HepG2 (cell line): ENCODE measurements at regions of chr17 and their contacts with region 1.

Region 1: DNA sequence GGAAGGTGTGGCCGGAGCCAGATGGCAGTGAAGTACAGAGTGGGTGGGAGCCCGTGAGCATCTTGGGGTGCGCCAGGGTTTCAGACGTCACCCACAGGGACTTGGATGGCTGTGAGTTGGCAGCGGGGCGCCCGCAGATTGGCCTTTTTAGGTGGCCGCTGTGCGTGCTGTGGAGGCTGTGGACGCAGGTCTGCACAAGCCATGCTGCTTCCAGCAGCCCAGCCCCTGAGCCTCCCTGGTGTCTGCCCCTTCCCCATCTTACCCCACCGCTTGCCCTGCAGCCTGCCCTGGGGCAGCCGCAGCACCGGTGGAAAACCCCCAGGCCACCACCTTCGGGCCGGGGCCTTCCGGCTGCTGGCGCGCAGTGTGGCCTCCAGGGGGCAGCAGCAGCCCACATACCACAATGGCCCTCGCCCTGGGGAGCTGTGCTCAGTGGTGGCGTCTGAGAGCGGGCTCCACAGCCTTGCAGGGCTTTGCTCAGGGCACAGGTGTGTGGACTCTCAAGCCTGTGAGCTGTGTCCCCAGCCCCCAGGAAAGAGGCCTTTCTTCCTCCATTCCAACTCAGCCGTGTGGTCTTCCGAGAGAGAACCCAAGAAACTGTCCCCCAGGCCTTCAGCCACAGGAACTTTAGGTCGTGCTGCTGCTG is 11.8 kb downstream of the ENDOV start:
- DNase-seq: peak; percentile 69
- ATAC-seq: peak; percentile 88
- H3K4me3 ChIP-seq: peak overlapping the region in 1 of 3 experiments; percentile 20; a peak in 1 of 6 replicates
- H3K27ac ChIP-seq: no peak overlapping the region
- H3K4me1 ChIP-seq: no peaks in the 10 kb centered on the region
- H3K27me3 ChIP-seq: no peaks in the 10 kb centered on the region
- CTCF ChIP-seq: peak; percentile 100
- EP300 ChIP-seq: no peak
- POLR2A ChIP-seq: no peak
- RAD21 ChIP-seq: peak; percentile 100

Region 2: DNA sequence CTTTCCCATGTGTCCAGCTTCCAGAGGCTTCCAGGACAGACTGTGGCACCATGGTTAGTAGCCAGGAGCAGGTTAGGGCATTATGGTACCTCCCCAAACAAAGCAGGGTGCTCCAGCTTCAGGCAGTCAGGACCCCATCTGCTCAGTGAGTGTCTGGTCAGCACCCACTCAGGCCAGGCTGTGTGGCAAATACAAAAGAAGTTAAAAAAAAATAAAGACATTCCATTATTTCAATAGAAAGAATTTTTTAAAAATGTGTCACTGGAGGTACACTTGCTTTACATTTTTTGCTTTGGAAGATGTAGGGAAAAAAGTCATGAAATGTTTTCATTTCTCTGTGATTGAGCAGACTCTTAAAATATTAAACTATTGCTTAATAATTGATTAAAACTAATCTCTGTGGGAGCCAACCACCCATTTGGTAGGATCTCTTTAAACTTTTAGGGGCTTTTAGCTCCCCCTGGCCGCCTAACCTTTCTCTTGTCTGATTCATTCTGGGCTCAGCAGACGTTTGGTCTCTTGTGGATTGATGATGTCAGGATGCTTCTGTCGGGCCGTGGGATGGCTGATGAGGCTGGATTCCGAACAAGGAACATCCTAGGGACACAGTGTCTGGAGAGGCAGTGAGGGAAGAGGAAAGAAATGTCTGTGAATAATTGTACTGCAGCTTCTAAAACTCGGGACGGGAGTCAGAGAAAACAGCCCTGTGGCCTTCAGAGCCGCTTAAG is 78.0 kb after region 1 on chr17:
- CTCF ChIA-PET with region 1: no interaction called
- POLR2A ChIA-PET with region 1: interaction called, 4 read pairs
- in situ Hi-C with region 1: loop called (anchors 5 kb)
- intact Hi-C with region 1: no loop called
- DNase-seq: no peak
- ATAC-seq: no peak
- H3K4me3 ChIP-seq: no peak overlapping the region
- H3K27ac ChIP-seq: no peak overlapping the region
- H3K4me1 ChIP-seq: peaks cover 14% of the 10 kb centered on the region
- H3K27me3 ChIP-seq: peaks cover 10 to 66% of the 10 kb centered on the region in 2 experiments; a peak in 4 of 5 replicates
- CTCF ChIP-seq: no peak
- EP300 ChIP-seq: no peak
- POLR2A ChIP-seq: no peak
- RAD21 ChIP-seq: no peak

Region 3: GRCh38 chr17:80511222-80512180 is 84.7 kb after region 1 on chr17:
- CTCF ChIA-PET with region 1: interaction called, 8 read pairs
- POLR2A ChIA-PET with region 1: no interaction called
- in situ Hi-C with region 1: loop called (anchors 5 kb)
- intact Hi-C with region 1: loop called (anchors 1 kb)
- DNase-seq: no peak
- ATAC-seq: peak; percentile 78
- H3K4me3 ChIP-seq: no peak overlapping the region
- H3K27ac ChIP-seq: no peak overlapping the region
- H3K4me1 ChIP-seq: no peaks in the 10 kb centered on the region
- H3K27me3 ChIP-seq: peaks cover 0 to 70% of the 10 kb centered on the region in 2 experiments
- CTCF ChIP-seq: peak; percentile 86
- EP300 ChIP-seq: no peak
- POLR2A ChIP-seq: no peak
- RAD21 ChIP-seq: peak; percentile 78

Region 4: DNA sequence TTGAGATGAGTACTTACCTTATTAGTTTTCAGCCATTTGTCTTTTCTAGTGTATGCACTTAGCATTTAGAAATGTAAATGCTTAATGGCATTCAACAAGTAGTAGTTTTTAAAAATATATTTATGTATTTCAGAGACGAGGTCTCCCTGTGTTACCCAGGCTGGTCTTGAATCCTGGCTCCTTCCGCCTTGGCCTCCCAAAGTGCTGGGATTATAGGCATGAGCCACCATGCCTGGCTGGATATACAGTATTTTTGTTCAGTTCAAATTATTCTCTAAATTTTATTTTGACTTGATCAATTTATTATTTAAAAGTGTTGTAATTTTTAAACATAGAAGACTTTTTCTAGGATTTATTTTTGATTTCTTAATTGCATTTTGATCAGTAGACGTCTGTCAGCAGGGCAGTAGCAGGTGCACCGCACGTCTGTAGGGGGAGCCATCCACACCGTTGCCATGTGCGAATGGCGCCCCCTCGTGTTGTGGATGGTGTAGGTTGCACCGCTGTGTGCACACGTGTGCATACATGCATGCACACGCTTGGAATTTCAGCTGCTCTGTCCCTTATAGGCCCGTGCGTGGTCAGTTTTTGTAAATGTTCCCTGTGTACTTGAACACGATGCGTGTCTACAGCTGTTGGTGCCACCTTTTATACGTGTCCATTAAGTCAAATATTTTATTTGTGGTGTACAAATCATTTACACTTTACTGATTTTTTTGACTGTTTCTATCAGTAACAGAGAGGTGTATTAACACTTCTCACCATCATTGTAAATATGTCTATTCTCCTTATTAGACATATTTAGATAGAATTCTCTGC is 148.5 kb after region 1 on chr17:
- CTCF ChIA-PET with region 1: interaction called, 114 read pairs
- POLR2A ChIA-PET with region 1: no interaction called
- in situ Hi-C with region 1: loop called (anchors 5 kb)
- intact Hi-C with region 1: loop called (anchors 1 kb)
- DNase-seq: peak; percentile 86
- ATAC-seq: peak; percentile 99
- H3K4me3 ChIP-seq: no peak overlapping the region
- H3K27ac ChIP-seq: no peak overlapping the region
- H3K4me1 ChIP-seq: peaks cover 5% of the 10 kb centered on the region; the same call in 1 of the 2 replicates
- H3K27me3 ChIP-seq: no peaks in the 10 kb centered on the region
- CTCF ChIP-seq: peak; percentile 100
- EP300 ChIP-seq: peak in 1 of 2 experiments; percentile 21; a peak in 1 of 4 replicates
- POLR2A ChIP-seq: no peak
- RAD21 ChIP-seq: peak; percentile 99

Region 5: GRCh38 chr17:80649678-80650672 is 223.2 kb after region 1 on chr17:
- CTCF ChIA-PET with region 1: interaction called, 7 read pairs
- POLR2A ChIA-PET with region 1: no interaction called
- in situ Hi-C with region 1: no loop called
- intact Hi-C with region 1: loop called (anchors 5 kb)
- DNase-seq: peak; percentile 77
- ATAC-seq: peak; percentile 98
- H3K4me3 ChIP-seq: no peak overlapping the region
- H3K27ac ChIP-seq: no peak overlapping the region
- H3K4me1 ChIP-seq: peaks cover 14% of the 10 kb centered on the region
- H3K27me3 ChIP-seq: no peaks in the 10 kb centered on the region
- CTCF ChIP-seq: peak; percentile 78
- EP300 ChIP-seq: no peak
- POLR2A ChIP-seq: no peak
- RAD21 ChIP-seq: peak; percentile 96

Region 6: DNA sequence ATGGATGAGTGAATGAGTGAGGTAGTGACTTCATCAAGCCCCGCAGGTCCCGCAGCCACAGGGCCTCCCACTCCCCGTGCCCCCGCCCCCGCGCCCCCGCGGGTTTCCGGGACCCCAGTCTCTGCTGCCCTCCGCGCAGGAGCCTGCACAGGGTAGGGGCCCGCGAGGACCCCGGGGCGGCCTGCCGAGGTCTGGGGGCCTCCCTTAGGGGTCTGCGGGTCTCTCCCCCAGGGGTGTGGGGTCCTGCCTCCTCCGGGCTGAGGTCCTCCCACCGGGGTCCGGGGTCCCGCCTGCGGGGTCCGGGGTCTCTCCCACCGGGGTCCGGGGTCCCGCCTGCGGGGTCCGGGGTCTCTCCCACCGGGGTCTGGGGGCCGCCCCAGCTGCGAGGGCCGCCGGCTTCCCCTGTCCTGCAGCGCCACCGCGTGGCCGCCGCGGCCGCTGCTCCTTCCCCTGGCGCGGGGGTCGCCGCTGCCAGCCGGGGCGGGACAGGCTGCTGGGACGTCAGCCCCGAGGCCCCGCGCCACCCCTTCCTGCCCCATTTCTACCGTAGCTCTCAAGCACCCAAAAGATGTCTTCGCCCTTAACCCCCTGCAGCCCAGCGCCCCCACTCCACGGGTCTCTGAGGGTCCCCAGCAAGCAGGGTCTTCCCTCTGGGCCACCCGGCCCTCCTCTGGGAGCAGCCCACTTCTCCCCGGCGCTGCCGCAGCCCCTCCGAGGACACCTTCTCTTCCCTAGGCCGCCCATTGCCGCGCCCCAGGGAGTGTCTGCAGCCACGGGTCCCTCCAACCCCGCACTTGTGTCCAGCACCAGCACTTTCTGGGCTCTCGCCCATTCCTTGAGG is 554.5 kb after region 1 on chr17:
- CTCF ChIA-PET with region 1: interaction called, 4 read pairs
- POLR2A ChIA-PET with region 1: no interaction called
- in situ Hi-C with region 1: loop called (anchors 5 kb)
- intact Hi-C with region 1: loop called (anchors 5 kb)
- DNase-seq: no peak
- ATAC-seq: peak; percentile 62
- H3K4me3 ChIP-seq: peak overlapping the region in 2 of 3 experiments; percentile 22 to 56; a peak in 2 of 6 replicates
- H3K27ac ChIP-seq: no peak overlapping the region
- H3K4me1 ChIP-seq: peaks cover 21% of the 10 kb centered on the region
- H3K27me3 ChIP-seq: peaks cover 8 to 46% of the 10 kb centered on the region in 2 experiments; a peak in 4 of 5 replicates
- CTCF ChIP-seq: peak; percentile 73
- EP300 ChIP-seq: no peak
- POLR2A ChIP-seq: no peak
- RAD21 ChIP-seq: peak; percentile 96